ENCODE measurements at regions of chr10 and their contacts with region 1.

Region 1: GRCh38 chr10:96374985-96375830 is 16.4 kb upstream of the OPALIN start:
- DNase-seq: no peak
- H3K4me3 ChIP-seq: peak overlapping the region; percentile 41
- H3K27me3 ChIP-seq: no peaks in the 10 kb centered on the region; the same call in 1 of the 2 replicates
- CTCF ChIP-seq: peak; percentile 100

Region 2: DNA sequence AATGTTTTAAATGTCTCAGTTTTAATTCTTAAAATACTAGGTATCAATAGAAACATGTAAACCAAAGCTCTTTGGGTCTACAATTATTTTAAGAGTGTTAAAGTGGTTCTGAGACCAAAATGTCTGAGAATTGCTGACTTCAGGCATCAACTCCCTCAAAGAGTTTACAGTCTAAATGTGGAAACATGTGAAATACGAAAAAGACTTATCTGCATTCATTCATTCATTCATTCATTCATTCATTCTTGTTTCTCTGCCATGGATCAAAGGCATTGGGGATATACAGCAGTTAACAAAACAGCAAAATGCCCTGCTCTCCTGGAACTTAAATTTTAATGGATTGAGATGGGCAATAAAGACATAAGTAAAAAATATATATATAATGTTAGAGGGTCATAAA is 173.7 kb before region 1 on chr10:
- CTCF ChIA-PET with region 1: no interaction called
- POLR2A ChIA-PET with region 1: no interaction called
- DNase-seq: no peak
- H3K4me3 ChIP-seq: no peak overlapping the region
- H3K27me3 ChIP-seq: no peaks in the 10 kb centered on the region
- CTCF ChIP-seq: no peak

Region 3: DNA sequence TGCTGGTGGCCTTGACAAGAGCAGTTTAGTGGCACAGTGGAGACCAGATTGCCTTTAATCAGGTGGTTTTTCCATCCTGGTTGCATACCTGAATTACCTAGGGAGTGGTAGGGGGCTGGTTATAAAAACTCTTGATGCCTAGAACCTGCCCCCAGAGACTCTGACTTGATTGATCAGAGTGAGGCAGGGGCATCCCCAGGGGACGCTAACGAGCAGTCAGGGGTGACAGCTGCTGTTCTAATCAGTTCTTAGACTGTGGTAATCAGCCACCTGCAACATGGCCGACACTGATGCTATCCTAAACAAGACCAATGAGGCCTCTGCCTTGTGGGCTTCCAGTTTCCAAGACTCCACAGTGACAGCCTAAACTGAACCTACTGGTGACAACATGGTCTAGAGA is 14.4 kb before region 1 on chr10:
- CTCF ChIA-PET with region 1: interaction called, 22 read pairs
- POLR2A ChIA-PET with region 1: no interaction called
- DNase-seq: no peak
- H3K4me3 ChIP-seq: no peak overlapping the region
- H3K27me3 ChIP-seq: no peaks in the 10 kb centered on the region; the same call in 1 of the 2 replicates
- CTCF ChIP-seq: no peak

Region 4: GRCh38 chr10:96390460-96390864 is 15.3 kb after region 1 on chr10:
- CTCF ChIA-PET with region 1: interaction called, 30 read pairs
- POLR2A ChIA-PET with region 1: no interaction called
- DNase-seq: no peak
- H3K4me3 ChIP-seq: no peak overlapping the region
- H3K27me3 ChIP-seq: no peaks in the 10 kb centered on the region; the same call in 1 of the 2 replicates
- CTCF ChIP-seq: no peak

Region 5: GRCh38 chr10:96513698-96514561 is 138.7 kb after region 1 on chr10 and contains the start of gene TLL2:
- CTCF ChIA-PET with region 1: interaction called, 38 read pairs
- POLR2A ChIA-PET with region 1: no interaction called
- DNase-seq: peak; percentile 47
- H3K4me3 ChIP-seq: peak within 1 kb of the TSS; percentile 46
- H3K27me3 ChIP-seq: peaks cover 4% of the 10 kb centered on the region; the same call in 1 of the 2 replicates
- CTCF ChIP-seq: peak; percentile 67
- polyA plus RNA-seq, gene TLL2: 0.05 and 0.06 TPM in 2 replicates

Measured in BJ (cell line).